AG04449 (cell line): ENCODE measurements at regions of chr2 and their contacts with region 1.

Region 1: DNA sequence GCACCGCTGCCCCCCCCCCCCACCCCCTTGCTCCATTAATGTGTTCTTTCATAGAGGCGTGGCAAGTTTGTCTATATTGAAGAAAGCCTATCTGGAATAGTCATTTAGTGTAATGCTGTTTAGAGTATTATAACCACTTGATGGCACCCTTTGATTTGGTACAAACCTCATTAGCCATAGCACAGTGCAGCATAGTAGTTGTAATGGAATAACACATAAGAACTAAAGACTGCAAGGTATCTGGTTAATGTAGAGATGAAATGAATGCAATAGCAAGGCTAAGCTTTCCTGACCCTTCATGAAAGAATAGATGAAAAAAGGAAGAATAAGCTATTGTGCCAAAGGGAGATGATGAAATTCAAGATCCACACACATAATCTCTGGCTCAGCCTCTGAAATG is 81.9 kb downstream of the EHBP1 start:
- DNase-seq: no peak
- H3K4me3 ChIP-seq: no peak overlapping the region
- CTCF ChIP-seq: peak; percentile 6

Region 2: DNA sequence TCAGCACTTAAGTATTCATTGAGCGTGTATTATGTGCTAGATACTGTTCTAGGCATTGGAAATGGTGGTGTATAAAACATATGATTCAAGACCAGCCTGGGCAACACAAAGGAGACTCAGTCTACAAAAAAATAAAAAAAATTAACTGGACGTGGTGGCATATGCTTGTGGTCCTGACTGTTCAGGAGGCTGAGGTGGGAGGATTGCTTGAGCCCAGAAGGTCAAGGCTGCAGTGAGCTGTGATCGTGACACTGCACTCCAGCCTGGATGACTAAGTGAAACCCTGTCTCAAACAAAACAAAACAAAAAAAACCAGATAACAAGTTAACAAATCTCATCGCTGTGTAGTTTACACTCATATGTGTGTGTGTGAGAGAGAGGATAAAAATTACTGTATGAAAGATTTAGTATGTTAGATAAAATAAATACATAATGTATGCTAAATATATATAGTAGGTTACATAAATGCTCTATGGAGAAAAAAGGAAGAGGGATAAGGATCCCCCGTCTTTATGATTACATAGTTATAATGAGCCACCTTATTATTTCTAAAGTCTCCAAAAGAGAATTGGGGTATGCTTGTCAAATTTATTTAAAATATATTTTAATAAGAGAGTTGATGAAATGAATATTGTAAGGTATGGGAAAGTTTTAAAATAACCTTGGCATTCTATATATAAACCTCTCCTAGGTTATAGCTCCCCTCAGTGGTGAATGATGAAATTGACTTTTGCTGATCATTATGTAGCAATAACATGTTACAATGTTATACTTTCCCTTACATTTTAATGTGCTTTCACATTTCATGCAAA is 12.6 kb before region 1 on chr2:
- CTCF ChIA-PET with region 1: interaction called, 41 read pairs
- POLR2A ChIA-PET with region 1: no interaction called
- DNase-seq: no peak
- H3K4me3 ChIP-seq: no peak overlapping the region
- CTCF ChIP-seq: peak; percentile 33

Region 3: DNA sequence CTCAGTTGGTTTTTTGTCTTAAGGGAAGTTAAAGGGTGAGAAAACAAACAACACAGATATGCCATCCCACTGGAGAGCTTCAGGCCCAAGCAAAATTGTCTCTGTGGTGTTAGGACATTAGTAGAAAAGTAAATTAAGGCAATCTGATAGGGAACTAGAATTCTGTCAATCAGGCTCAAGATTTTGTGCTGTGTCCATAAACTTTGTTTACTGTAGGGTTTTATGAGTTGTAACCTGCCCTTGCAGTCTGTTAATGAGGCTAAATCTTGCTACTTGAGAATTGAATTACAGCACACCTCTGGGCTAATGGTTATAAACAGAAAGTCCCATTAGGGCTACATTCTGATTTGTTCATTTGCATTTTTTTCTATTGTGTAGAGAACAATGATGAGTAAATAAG is 185.2 kb after region 1 on chr2:
- CTCF ChIA-PET with region 1: no interaction called
- POLR2A ChIA-PET with region 1: no interaction called
- DNase-seq: no peak
- H3K4me3 ChIP-seq: no peak overlapping the region
- CTCF ChIP-seq: no peak